Activated B cell treated with CpG ODN at 0.5 μM for 24 hours (primary cell): ENCODE measurements at regions of chr3 and their contacts with region 1.

Region 1: GRCh38 chr3:157174649-157175498 is 14.9 kb upstream of the CCNL1 start:
- DNase-seq: peak; percentile 91
- ATAC-seq: peak; percentile 90
- H3K4me3 Mint-ChIP-seq: peak overlapping the region; percentile 90
- H3K27ac Mint-ChIP-seq: peak overlapping the region; percentile 98
- H3K4me1 Mint-ChIP-seq: peaks cover 30% of the 10 kb centered on the region
- H3K27me3 Mint-ChIP-seq: no peaks in the 10 kb centered on the region
- CTCF ChIP-seq: no peak

Region 2: GRCh38 chr3:155854141-155854940 is 1320.5 kb before region 1 on chr3 and contains the start of gene SLC33A1:
- CTCF ChIA-PET with region 1: no interaction called
- POLR2A ChIA-PET with region 1: no interaction called
- intact Hi-C with region 1: loop called (anchors 1 kb)
- DNase-seq: peak; percentile 97
- ATAC-seq: peak; percentile 91
- H3K4me3 Mint-ChIP-seq: peak within 1 kb of the TSS; percentile 98
- H3K27ac Mint-ChIP-seq: peak within 1 kb of the TSS; percentile 98
- H3K4me1 Mint-ChIP-seq: peaks cover 41% of the 10 kb centered on the region
- H3K27me3 Mint-ChIP-seq: no peaks in the 10 kb centered on the region
- CTCF ChIP-seq: no peak
- total RNA-seq, gene SLC33A1: 19.8 and 23.3 TPM in 2 replicates

Region 3: DNA sequence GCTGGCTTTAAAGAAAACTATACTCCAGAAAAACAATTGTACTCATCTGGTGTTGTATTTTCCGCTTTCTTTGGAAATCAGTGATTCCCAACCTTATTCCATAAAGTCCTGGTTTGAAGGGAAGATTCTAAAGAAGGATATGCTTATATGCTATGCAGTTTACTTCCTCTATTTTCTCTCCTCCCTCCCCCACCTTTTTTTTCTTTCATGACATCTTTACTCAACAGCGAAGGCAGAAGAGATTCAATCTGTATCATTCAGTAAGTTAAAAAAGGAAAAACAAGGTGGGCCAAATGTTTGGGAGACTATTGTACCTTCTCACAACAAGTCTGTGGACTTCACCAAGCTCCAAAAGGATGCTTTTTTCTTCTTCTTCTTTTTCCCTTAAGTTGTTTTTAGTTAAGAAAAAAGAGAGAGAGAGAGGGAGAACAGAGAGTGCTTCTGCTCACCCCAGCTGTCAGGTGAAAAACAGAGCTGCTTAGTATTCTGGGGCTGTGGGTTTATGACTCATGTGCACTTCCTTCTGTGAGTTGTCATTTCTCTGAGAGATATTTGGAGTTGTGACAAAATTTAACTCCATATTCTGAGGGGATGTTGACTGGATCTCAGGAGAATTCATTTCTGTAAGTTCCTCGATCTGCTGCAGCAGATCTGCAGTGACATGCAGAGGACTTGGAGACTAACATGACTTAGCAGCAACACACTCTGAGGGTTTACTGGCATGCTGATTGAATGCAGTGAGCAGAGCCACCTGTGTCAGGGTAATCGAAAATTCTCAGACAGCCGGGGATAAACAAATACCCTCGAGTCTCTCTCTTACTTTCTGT is 690.7 kb before region 1 on chr3:
- CTCF ChIA-PET with region 1: no interaction called
- POLR2A ChIA-PET with region 1: interaction called, 26 read pairs
- intact Hi-C with region 1: loop called (anchors 1 kb)
- DNase-seq: peak; percentile 20
- ATAC-seq: peak; percentile 81
- H3K4me3 Mint-ChIP-seq: peak overlapping the region; percentile 79
- H3K27ac Mint-ChIP-seq: peak overlapping the region; percentile 93
- H3K4me1 Mint-ChIP-seq: peaks cover 32% of the 10 kb centered on the region
- H3K27me3 Mint-ChIP-seq: peaks cover under 1% of the 10 kb centered on the region
- CTCF ChIP-seq: no peak

Region 4: GRCh38 chr3:156816800-156817645 is 357.9 kb before region 1 on chr3:
- CTCF ChIA-PET with region 1: no interaction called
- POLR2A ChIA-PET with region 1: interaction called, 6 read pairs
- intact Hi-C with region 1: loop called (anchors 1 kb)
- DNase-seq: peak; percentile 93
- ATAC-seq: peak; percentile 83
- H3K4me3 Mint-ChIP-seq: peak overlapping the region; percentile 94
- H3K27ac Mint-ChIP-seq: peak overlapping the region; percentile 99
- H3K4me1 Mint-ChIP-seq: peaks cover 42% of the 10 kb centered on the region
- H3K27me3 Mint-ChIP-seq: no peaks in the 10 kb centered on the region
- CTCF ChIP-seq: no peak

Region 5: GRCh38 chr3:157136647-157137387 is 38.1 kb before region 1 on chr3:
- CTCF ChIA-PET with region 1: interaction called, 3 read pairs
- POLR2A ChIA-PET with region 1: interaction called, 10 read pairs
- intact Hi-C with region 1: no loop called
- DNase-seq: no peak
- ATAC-seq: no peak
- H3K4me3 Mint-ChIP-seq: no peak overlapping the region
- H3K27ac Mint-ChIP-seq: no peak overlapping the region
- H3K4me1 Mint-ChIP-seq: peaks cover 5% of the 10 kb centered on the region
- H3K27me3 Mint-ChIP-seq: no peaks in the 10 kb centered on the region
- CTCF ChIP-seq: no peak

Region 6: GRCh38 chr3:157239082-157239704 is 64.3 kb after region 1 on chr3:
- CTCF ChIA-PET with region 1: interaction called, 5 read pairs
- POLR2A ChIA-PET with region 1: no interaction called
- intact Hi-C with region 1: loop called (anchors 1 kb)
- DNase-seq: peak; percentile 18
- ATAC-seq: peak; percentile 91
- H3K4me3 Mint-ChIP-seq: no peak overlapping the region
- H3K27ac Mint-ChIP-seq: no peak overlapping the region
- H3K4me1 Mint-ChIP-seq: peaks cover 2% of the 10 kb centered on the region
- H3K27me3 Mint-ChIP-seq: no peaks in the 10 kb centered on the region
- CTCF ChIP-seq: peak; percentile 60

Region 7: DNA sequence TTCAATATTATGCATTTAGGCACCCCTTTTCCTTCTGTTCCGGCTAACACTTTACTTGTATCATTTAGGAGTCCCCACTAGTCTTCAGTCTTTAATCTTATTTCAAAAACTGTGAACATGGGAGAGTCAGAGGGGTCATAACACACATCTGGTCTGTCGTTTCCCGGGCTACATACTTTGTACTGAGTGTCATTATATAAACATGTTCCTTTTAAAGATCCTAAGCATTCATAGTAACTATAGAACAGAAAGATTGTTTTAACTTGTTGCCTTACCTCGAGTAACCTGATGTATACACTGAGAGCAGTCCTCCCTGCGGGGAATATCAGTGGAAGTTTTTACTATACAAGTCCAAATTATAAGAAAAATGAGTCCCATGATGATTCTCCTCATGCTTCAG is 406.5 kb after region 1 on chr3:
- CTCF ChIA-PET with region 1: no interaction called
- POLR2A ChIA-PET with region 1: no interaction called
- intact Hi-C with region 1: no loop called
- DNase-seq: no peak
- ATAC-seq: no peak
- H3K4me3 Mint-ChIP-seq: no peak overlapping the region
- H3K27ac Mint-ChIP-seq: no peak overlapping the region
- H3K4me1 Mint-ChIP-seq: no peaks in the 10 kb centered on the region
- H3K27me3 Mint-ChIP-seq: no peaks in the 10 kb centered on the region
- CTCF ChIP-seq: no peak